Psoas muscle (tissue), 8 donors: ENCODE measurements at regions of chr3 and their contacts with region 1.

Region 1: GRCh38 chr3:188270423-188270972 is 116.5 kb downstream of the LPP start:
- DNase-seq: no peak
- ATAC-seq: no peak
- H3K4me3 ChIP-seq: no peak overlapping the region
- H3K27ac ChIP-seq: peak overlapping the region; percentile 60
- H3K4me1 ChIP-seq: peaks cover 62% of the 10 kb centered on the region
- H3K27me3 ChIP-seq: no peaks in the 10 kb centered on the region
- CTCF ChIP-seq: no peak

Region 2: DNA sequence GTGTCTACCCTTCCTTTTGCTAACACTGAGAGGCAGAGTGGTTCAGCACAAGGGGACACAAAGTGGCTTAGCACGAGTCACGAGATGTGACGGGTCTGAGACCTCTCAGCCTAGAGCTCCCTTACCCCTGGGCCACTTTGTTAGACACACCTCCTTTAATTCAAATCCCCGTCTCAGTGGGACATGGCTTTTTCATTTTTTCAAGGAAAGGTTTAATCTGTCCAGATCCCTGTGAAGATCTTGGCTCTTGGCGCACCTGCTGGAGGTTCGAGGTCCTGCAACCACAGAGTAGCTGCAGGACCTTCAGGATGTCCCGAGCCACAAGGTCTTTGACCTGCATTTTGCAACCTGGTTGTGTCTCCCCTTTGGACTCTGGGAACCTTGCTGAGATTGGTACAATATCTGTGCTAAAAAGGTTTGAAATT is 64.5 kb before region 1 on chr3:
- intact Hi-C with region 1: no loop called
- DNase-seq: no peak
- ATAC-seq: peak; percentile 23 to 68 (median 62)
- H3K4me3 ChIP-seq: no peak overlapping the region
- H3K27ac ChIP-seq: peak overlapping the region; percentile 47
- H3K4me1 ChIP-seq: peaks cover 30% of the 10 kb centered on the region
- H3K27me3 ChIP-seq: no peaks in the 10 kb centered on the region
- CTCF ChIP-seq: no peak

Region 3: DNA sequence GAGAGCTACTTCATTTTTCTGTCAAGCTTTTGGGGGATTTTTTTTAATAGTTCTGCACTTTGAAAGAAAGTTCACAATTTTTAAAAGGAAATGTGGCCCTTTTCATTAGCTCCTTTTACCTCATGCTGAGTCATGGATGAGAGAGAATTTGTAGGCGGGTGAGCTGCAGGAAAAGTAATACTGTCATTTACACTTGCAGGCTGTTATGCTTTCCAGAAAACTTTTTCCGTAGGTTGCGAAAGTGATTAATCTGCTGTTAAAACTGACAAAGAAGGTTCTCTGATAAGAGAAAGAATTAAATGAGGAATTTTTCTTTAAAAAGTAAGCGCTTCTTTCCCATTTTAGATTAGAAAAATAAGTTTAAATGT is 313.6 kb after region 1 on chr3:
- intact Hi-C with region 1: loop called in 1 of 2 experiments (anchors 5 kb)
- DNase-seq: no peak
- ATAC-seq: peak; percentile 58 to 89 (median 82)
- H3K4me3 ChIP-seq: peak overlapping the region; percentile 63
- H3K27ac ChIP-seq: peak overlapping the region; percentile 83
- H3K4me1 ChIP-seq: peaks cover 45% of the 10 kb centered on the region
- H3K27me3 ChIP-seq: no peaks in the 10 kb centered on the region
- CTCF ChIP-seq: no peak